ENCODE measurements at regions of chr9 and their contacts with region 1.

Region 1: DNA sequence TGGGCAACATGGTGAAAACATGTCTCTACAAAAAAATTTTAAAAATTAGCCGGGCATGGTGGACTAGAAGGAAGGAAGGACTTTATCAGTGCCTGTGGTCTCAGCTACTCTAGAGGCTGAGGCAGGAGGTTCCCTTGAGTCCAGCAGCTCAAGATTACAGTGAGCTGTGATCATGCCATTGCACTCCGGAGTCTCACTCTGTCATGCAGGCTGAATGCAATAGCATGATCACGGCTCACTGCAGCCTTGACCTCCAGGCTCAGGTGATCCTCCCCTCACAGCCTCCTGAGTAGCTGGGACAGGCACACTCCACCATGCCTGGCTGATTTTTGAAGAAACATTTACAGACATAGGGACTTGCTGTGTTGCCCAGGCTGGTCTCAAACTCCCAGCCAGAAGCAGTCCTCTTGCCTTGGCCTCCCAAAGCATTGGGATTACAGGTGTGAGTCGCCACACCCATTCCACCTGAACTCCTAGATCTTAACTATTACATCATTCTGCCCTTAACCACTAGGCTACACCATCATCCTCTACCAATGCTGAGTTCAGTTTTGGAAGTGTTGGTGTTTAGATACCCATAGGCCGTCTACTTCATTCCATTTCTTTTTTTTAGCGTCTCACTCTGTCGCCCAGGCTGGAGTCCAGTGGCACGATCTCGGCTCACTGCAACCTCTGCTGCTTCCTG is 2.0 kb upstream of the URM1 start:
- DNase-seq: no peak

Region 2: DNA sequence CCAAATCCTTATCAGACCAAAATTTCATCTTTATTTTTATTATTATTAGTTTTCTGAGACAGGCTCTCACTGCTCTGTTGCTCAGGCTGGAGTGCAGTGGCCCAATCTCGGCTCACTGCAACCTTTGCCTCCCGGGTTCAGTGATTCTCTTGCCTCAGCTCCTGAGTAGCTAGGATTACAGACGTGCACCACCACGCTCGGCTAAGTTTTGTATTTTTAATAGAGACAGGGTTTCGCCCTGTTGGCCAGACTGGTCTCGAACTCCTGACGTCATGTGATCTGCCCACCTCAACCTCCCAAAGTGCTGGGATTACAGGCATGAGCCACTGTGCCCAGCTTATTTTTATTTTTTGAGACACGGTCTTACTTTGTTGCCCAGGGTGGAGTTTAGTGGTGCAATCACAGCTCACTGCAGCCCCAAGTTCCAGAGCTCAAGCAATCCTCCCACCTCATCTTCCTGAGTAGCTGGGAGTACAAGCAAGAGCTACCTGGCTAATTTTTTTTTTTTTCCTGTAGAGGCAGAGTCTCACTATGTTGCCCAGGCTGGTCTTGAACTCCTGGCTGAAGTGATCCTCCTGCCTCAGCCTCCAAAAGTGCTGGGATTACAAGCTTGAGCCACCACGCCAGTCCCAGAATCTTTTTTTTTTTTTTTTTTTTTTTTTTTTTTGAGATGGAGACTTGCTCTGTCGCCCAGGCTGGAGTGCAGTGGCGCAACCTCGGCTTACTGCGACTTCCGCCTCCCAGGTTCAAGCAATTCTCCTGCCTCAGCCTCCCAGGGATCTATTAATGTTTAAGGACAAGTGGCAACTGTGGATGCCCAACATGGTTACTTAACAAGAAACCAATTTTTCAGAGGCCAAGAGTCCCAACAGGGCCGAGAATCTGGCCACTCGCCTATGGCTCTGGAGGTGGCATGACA is 30.1 kb before region 1 on chr9:
- intact Hi-C with region 1: loop called in 1 of 2 experiments (anchors 1 kb)
- DNase-seq: no peak

Region 3: DNA sequence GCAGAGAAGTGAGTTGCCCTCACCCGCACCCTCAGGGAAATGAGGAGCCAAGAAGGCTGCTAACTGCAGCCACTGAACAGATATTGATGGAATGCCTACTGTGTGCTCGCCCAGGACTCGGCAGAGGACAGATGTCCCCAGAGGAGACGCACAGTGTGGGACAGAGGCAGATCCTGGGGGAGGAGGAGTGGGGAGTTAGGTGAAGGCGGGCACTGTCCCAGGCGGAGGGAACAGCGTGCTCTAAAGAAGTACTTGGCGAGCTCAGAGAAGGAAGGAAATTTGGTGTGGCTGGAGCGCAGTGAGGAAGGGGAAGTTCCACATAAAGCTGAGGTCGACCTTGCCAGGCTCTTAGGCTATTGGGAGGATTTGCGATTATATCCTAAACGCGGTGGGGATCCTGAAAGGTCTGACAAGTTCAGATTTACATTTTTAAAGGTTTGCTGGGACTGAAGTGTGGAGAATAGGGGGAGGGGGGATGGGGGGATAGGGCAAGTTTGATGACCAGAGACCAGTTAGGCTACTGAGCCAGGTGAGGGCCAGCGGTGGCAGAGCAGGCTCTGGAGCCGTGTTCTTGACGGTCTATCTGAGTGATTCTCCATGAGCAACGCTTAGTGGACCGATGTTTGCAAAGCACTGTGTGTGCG is 27.9 kb after region 1 on chr9:
- intact Hi-C with region 1: no loop called
- DNase-seq: no peak